Activated CD4-positive, alpha-beta memory T cell treated with anti-CD3 and anti-CD28 coated beads, Interleukin-2, amount 10 ng/mL, durations not matched to agents 7 days and 5 days (primary cell): ENCODE measurements at regions of chr1 and their contacts with region 1.

Region 1: GRCh38 chr1:89022167-89022959 is at the start of gene GBP3:
- DNase-seq: no peak
- H3K4me3 Mint-ChIP-seq: peak within 1 kb of the TSS; percentile 87
- H3K27ac Mint-ChIP-seq: peak within 1 kb of the TSS; percentile 84
- H3K4me1 Mint-ChIP-seq: peaks cover 40% of the 10 kb centered on the region
- H3K27me3 Mint-ChIP-seq: no peaks in the 10 kb centered on the region
- total RNA-seq, gene GBP3: 33.6 to 34.4 TPM

Region 2: DNA sequence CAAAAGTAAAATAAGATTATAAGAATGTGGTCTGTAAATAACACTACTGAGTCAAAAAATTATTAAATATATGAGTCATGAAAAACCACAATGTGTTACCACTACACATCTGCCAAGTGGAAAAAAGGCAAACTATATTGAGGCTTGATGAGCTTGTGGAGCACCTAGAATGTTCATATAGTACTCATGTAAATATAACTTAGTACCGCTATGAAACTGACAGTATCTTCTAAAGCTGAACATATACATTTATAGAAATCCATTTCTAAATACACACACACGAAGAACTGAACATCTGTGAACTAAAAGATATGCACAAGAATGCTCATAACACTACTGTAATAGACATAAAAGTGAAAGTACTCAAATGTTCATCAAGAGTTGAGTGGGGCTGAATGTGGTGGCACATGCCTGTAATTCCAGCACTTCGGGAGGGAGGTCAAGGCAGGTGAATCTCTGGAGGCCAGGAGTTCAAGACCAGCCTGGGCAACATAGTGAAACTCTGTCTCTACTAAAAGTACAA is 18.8 kb after region 1 on chr1:
- CTCF ChIA-PET with region 1: interaction called, 5 read pairs
- POLR2A ChIA-PET with region 1: interaction called, 25 read pairs
- DNase-seq: no peak
- H3K4me3 Mint-ChIP-seq: no peak overlapping the region
- H3K27ac Mint-ChIP-seq: no peak overlapping the region
- H3K4me1 Mint-ChIP-seq: peaks cover 25% of the 10 kb centered on the region
- H3K27me3 Mint-ChIP-seq: peaks cover 22% of the 10 kb centered on the region

Region 3: DNA sequence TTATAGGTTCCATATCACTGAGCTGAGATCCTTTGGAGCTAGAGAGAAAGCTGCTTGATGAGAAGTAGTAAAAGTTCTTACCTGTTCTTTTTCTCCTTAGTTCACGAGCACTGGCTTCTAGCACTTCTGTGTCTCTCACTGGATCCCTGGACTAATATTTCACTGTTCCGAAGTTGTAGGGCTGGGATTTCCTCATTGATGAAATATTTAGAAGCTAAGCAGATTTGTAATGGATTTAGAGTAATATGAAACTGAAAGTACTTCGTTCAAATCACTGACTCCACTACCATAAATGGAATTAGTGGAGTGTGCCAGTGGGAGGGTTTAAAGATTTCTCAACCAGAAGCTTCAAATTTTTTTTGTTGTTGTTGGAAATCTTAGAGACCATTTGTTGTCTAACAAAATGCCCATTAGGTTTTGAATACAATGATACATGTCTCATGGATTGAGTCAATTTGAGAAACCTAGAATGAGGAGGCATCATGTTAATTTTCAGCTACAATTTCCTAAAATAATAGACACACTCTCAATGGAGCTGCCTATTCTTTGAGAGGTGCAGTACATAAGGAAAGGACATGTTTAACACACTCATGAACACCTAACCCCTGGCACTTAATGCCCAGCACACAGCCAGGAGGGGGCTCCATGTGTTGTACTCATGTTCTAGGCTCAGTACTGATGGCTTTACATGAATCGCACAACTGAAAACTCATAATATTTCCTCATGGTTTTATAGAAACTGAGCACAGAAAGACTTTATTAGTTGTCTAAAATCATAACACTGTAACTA is 42.9 kb after region 1 on chr1 and contains the start of gene GBP1:
- CTCF ChIA-PET with region 1: interaction called, 4 read pairs
- POLR2A ChIA-PET with region 1: interaction called, 65 read pairs
- DNase-seq: no peak
- H3K4me3 Mint-ChIP-seq: peak within 1 kb of the TSS; percentile 96
- H3K27ac Mint-ChIP-seq: peak within 1 kb of the TSS; percentile 88
- H3K4me1 Mint-ChIP-seq: peaks cover 59% of the 10 kb centered on the region
- H3K27me3 Mint-ChIP-seq: no peaks in the 10 kb centered on the region
- total RNA-seq, gene GBP1: 141 to 144 TPM

Region 4: GRCh38 chr1:89112871-89113613 is 90.7 kb after region 1 on chr1:
- CTCF ChIA-PET with region 1: no interaction called
- POLR2A ChIA-PET with region 1: no interaction called
- DNase-seq: no peak
- H3K4me3 Mint-ChIP-seq: no peak overlapping the region
- H3K27ac Mint-ChIP-seq: no peak overlapping the region
- H3K4me1 Mint-ChIP-seq: peaks cover 24% of the 10 kb centered on the region
- H3K27me3 Mint-ChIP-seq: no peaks in the 10 kb centered on the region

Region 5: DNA sequence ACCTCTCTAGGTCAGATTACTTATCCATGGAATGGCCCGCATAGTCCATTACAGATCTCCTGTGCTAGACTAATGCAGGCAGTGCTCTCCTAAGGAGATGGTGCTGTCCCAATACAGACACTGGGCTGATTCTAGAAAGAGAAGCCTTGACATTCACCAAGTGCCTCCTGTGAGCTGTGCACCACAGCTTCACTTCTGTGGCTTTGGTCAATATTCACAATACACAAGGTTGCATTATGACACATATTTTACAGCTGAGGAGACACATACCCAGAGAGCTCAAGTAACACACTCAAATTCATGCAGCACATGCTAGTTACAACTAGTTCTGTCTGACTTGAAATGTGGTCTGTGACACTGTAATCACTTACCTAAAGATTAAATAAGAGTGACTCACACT is 442.8 kb after region 1 on chr1:
- CTCF ChIA-PET with region 1: no interaction called
- POLR2A ChIA-PET with region 1: no interaction called
- DNase-seq: no peak
- H3K4me3 Mint-ChIP-seq: no peak overlapping the region
- H3K27ac Mint-ChIP-seq: no peak overlapping the region
- H3K4me1 Mint-ChIP-seq: peaks cover 30% of the 10 kb centered on the region
- H3K27me3 Mint-ChIP-seq: peaks cover 70% of the 10 kb centered on the region